ENCODE measurements at regions of chr1 and their contacts with region 1.

Region 1: DNA sequence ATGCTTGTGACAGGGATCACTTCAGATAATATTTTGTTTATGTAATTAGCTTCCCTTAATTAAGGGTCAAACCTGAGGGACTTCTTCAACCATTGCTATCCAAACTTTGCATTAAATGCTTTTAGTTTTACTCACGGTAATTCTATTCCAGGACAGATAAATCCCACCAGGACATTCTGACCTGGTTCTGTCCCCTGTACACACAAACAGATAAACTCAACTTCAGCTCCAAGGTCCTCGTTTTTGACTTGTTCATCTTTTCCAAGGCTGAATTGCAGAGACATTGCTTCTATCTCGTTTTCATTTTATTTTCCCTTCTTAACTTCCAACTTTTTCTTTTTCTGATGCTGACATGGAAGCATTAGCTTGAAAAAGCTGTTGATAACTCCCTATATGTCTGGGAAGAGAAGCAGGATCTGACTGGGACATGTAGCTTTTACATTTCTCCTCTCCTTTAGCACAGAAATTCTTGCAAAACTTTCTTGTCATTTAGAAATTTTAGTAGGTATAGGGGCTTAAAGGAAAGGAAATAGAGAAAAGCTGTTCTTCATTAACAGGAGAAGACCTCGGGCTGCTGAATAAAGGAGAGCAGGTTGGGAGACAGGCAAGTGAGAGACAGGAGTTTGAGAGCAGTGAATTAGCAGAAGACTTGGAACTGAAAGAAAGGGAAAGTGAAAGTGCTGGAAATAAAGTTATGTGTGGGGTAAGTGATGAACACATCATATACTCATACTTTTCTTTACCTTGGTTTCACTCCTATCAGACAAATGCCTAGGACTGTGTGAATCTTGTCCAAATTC is 231.7 kb upstream of the B3GALT2 start:
- DNase-seq: no peak
- ATAC-seq: peak; percentile 94
- H3K4me3 Mint-ChIP-seq: peak overlapping the region; percentile 59
- H3K27ac Mint-ChIP-seq: peak overlapping the region; percentile 68
- H3K4me1 Mint-ChIP-seq: peaks cover 43% of the 10 kb centered on the region
- H3K27me3 Mint-ChIP-seq: no peaks in the 10 kb centered on the region

Region 2: GRCh38 chr1:193456811-193457280 is 38.7 kb after region 1 on chr1:
- CTCF ChIA-PET with region 1: no interaction called
- POLR2A ChIA-PET with region 1: no interaction called
- intact Hi-C with region 1: loop called (anchors 2 to 5 kb)
- DNase-seq: no peak
- ATAC-seq: no peak
- H3K4me3 Mint-ChIP-seq: no peak overlapping the region
- H3K27ac Mint-ChIP-seq: no peak overlapping the region
- H3K4me1 Mint-ChIP-seq: peaks cover 21% of the 10 kb centered on the region
- H3K27me3 Mint-ChIP-seq: no peaks in the 10 kb centered on the region

Region 3: GRCh38 chr1:193569096-193569982 is 151.2 kb after region 1 on chr1:
- CTCF ChIA-PET with region 1: no interaction called
- POLR2A ChIA-PET with region 1: no interaction called
- intact Hi-C with region 1: loop called in 1 of 2 experiments (anchors 5 kb)
- DNase-seq: no peak
- ATAC-seq: peak; percentile 92
- H3K4me3 Mint-ChIP-seq: no peak overlapping the region
- H3K27ac Mint-ChIP-seq: peak overlapping the region; percentile 79
- H3K4me1 Mint-ChIP-seq: peaks cover 27% of the 10 kb centered on the region
- H3K27me3 Mint-ChIP-seq: no peaks in the 10 kb centered on the region

Region 4: DNA sequence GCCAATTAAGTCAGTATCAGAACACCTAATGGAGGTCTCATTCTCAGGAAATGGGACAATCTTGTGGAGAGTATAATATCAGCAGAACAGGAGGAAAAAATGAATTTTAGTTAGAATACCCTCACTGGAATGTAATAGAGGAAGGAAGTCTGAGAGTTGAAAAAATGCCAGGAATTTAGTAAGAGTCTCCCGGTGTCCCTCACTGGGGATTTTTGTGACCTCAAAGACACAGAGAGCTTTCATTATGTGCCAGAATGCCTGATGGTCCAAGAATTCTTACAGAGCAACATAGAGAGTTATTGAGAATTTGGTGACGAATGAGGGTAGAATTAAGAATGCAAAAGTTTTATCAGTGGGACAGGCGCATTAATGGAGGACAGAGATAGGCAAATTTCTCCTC is 211.7 kb after region 1 on chr1:
- CTCF ChIA-PET with region 1: no interaction called
- POLR2A ChIA-PET with region 1: no interaction called
- intact Hi-C with region 1: no loop called
- DNase-seq: no peak
- ATAC-seq: no peak
- H3K4me3 Mint-ChIP-seq: no peak overlapping the region
- H3K27ac Mint-ChIP-seq: no peak overlapping the region
- H3K4me1 Mint-ChIP-seq: peaks cover 9% of the 10 kb centered on the region
- H3K27me3 Mint-ChIP-seq: no peaks in the 10 kb centered on the region

Region 5: GRCh38 chr1:193700710-193701355 is 282.7 kb after region 1 on chr1:
- CTCF ChIA-PET with region 1: no interaction called
- POLR2A ChIA-PET with region 1: no interaction called
- intact Hi-C with region 1: loop called in 1 of 2 experiments (anchors 5 kb)
- DNase-seq: no peak
- ATAC-seq: peak; percentile 91
- H3K4me3 Mint-ChIP-seq: no peak overlapping the region
- H3K27ac Mint-ChIP-seq: no peak overlapping the region
- H3K4me1 Mint-ChIP-seq: peaks cover 15% of the 10 kb centered on the region
- H3K27me3 Mint-ChIP-seq: no peaks in the 10 kb centered on the region